ENCODE measurements at regions of chr1 and their contacts with region 1.

Region 1: DNA sequence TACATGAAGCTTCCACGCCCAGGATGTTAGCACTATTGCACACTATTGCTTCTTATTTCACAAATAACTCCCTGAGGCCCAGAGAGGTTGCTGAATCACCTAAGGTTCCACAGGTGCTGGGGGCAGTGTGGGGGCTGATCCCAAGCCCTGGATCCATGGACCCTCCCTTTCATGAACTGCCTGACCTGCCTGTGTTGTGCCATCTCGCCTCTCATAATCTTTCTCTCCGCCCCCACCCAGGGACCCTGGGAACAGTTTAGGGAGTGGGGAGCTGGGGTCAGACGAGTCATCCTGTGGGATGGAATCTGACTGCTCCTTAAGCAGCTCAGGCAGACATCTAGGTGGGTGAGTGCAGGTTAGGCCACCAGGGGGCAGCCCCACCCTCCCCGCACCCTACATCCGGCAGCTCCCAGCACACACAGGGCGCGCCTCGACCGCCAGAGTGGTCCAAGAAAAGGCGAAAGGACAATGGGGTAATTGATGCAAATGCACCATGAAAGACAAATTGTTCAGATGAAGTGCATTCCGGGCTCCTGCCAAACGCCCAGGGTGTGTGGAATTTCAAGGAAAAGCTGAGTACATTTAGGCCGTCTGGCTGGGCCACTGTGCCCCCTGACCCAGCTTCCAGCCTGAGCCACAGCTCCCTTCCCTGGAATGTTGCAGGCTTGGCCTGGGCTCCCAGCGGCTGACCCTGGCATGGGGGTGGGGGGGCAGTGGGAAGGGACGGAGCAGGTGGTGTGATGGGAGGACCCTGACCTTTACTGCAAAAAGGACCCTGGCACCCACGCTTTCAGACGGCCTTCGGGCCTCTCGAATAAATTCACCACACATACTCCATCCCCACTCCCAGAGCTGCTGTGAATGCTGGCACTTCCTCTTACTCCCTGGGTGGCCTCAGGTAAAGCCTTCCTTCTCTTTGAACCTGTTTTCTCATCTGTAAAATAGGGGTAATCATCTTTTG is 20.8 kb downstream of the PHLDA3 start:
- DNase-seq: peak; percentile 82
- H3K4me3 ChIP-seq: no peak overlapping the region
- H3K27ac ChIP-seq: no peak overlapping the region
- H3K4me1 ChIP-seq: peaks cover 31% of the 10 kb centered on the region
- H3K27me3 ChIP-seq: no peaks in the 10 kb centered on the region
- CTCF ChIP-seq: peak; percentile 87

Region 2: GRCh38 chr1:201436393-201436792 is 11.8 kb before region 1 on chr1:
- CTCF ChIA-PET with region 1: interaction called, 31 read pairs
- POLR2A ChIA-PET with region 1: interaction called, 3 read pairs
- intact Hi-C with region 1: no loop called
- DNase-seq: peak; percentile 56
- H3K4me3 ChIP-seq: no peak overlapping the region
- H3K27ac ChIP-seq: no peak overlapping the region
- H3K4me1 ChIP-seq: peaks cover 10% of the 10 kb centered on the region
- H3K27me3 ChIP-seq: no peaks in the 10 kb centered on the region
- CTCF ChIP-seq: no peak; the same call in 1 of the 2 replicates

Region 3: GRCh38 chr1:201945157-201945556 is 497.0 kb after region 1 on chr1:
- CTCF ChIA-PET with region 1: no interaction called
- POLR2A ChIA-PET with region 1: no interaction called
- intact Hi-C with region 1: no loop called
- DNase-seq: peak; percentile 34
- H3K4me3 ChIP-seq: no peak overlapping the region
- H3K27ac ChIP-seq: no peak overlapping the region
- H3K4me1 ChIP-seq: peaks cover 8% of the 10 kb centered on the region
- H3K27me3 ChIP-seq: no peaks in the 10 kb centered on the region
- CTCF ChIP-seq: peak; percentile 51; the same call in 1 of the 2 replicates

Measured in A673 (cell line).